ENCODE measurements at regions of chr16 and their contacts with region 1.

Region 1: DNA sequence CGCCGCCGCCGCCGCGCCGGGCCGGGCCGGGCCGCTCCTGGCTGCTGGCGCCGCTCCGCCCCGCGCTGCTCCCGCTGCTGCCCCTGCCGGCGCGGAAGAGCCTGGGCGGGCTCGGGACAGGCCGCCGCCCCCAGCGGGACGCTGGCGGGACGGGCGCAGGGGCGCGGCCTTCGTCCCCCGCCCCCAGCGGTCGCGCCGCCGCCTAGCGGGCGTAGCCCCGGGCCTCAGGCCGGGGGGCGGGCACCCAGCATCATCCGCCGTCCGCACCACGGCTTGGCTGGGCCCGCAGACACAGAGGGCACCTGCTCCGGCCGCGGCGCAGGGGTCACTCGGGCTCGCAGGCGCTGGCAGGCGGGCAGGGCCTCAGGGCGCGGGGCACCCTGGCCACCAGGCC is at the start of gene AMFR:
- DNase-seq: peak; percentile 57 to 86 (median 68)
- ATAC-seq: peak; percentile 97
- H3K4me3 ChIP-seq: peak within 1 kb of the TSS; percentile 73
- H3K4me3 Mint-ChIP-seq: peak within 1 kb of the TSS; percentile 95 to 100 (median 98)
- H3K27ac ChIP-seq: peak within 1 kb of the TSS; percentile 82
- H3K27ac Mint-ChIP-seq: peak within 1 kb of the TSS; percentile 74 to 96 (median 94)
- H3K4me1 ChIP-seq: peaks cover 6 to 8% of the 10 kb centered on the region in 2 donors
- H3K4me1 Mint-ChIP-seq: peaks cover 32 to 45% (median 40%) of the 10 kb centered on the region in 7 donors
- H3K27me3 ChIP-seq: no peaks in the 10 kb centered on the region
- H3K27me3 Mint-ChIP-seq: no peaks in the 10 kb centered on the region
- total RNA-seq, gene AMFR: 45.5 to 83.3 (median 62.0) TPM

Region 2: GRCh38 chr16:56356276-56357240 is 68.9 kb before region 1 on chr16:
- CTCF ChIA-PET with region 1: no interaction called
- POLR2A ChIA-PET with region 1: no interaction called
- intact Hi-C with region 1: loop called (anchors 2 kb)
- DNase-seq: peak; percentile 26 to 62 (median 43)
- ATAC-seq: peak; percentile 87
- H3K4me3 ChIP-seq: peak overlapping the region; percentile 63
- H3K4me3 Mint-ChIP-seq: peak overlapping the region; percentile 82 to 93 (median 90)
- H3K27ac ChIP-seq: peak overlapping the region; percentile 60
- H3K27ac Mint-ChIP-seq: peak overlapping the region; percentile 71 to 95 (median 91)
- H3K4me1 ChIP-seq: peaks cover 0 to 11% of the 10 kb centered on the region in 2 donors
- H3K4me1 Mint-ChIP-seq: peaks cover 4 to 41% (median 38%) of the 10 kb centered on the region in 7 donors
- H3K27me3 ChIP-seq: no peaks in the 10 kb centered on the region
- H3K27me3 Mint-ChIP-seq: no peaks in the 10 kb centered on the region

Region 3: GRCh38 chr16:56409195-56409594 is 16.2 kb before region 1 on chr16:
- CTCF ChIA-PET with region 1: no interaction called
- POLR2A ChIA-PET with region 1: interaction called, 3 read pairs
- intact Hi-C with region 1: loop called in 1 of 2 experiments (anchors 2 kb)
- DNase-seq: no peak
- ATAC-seq: no peak
- H3K4me3 ChIP-seq: no peak overlapping the region
- H3K4me3 Mint-ChIP-seq: no peak overlapping the region
- H3K27ac ChIP-seq: no peak overlapping the region
- H3K27ac Mint-ChIP-seq: peak overlapping the region in 1 of 9 donors; percentile 26
- H3K4me1 ChIP-seq: no peaks in the 10 kb centered on the region
- H3K4me1 Mint-ChIP-seq: peaks cover 0 to 14% (median 2%) of the 10 kb centered on the region in 7 donors
- H3K27me3 ChIP-seq: no peaks in the 10 kb centered on the region
- H3K27me3 Mint-ChIP-seq: no peaks in the 10 kb centered on the region

Region 4: GRCh38 chr16:56436258-56436657 is 10.8 kb after region 1 on chr16:
- CTCF ChIA-PET with region 1: no interaction called
- POLR2A ChIA-PET with region 1: interaction called, 4 read pairs
- intact Hi-C with region 1: loop called in 1 of 2 experiments (anchors 1 kb)
- DNase-seq: no peak
- ATAC-seq: no peak
- H3K4me3 ChIP-seq: no peak overlapping the region
- H3K4me3 Mint-ChIP-seq: no peak overlapping the region
- H3K27ac ChIP-seq: no peak overlapping the region
- H3K27ac Mint-ChIP-seq: peak overlapping the region in 2 of 9 donors; percentile 18 to 36
- H3K4me1 ChIP-seq: no peaks in the 10 kb centered on the region
- H3K4me1 Mint-ChIP-seq: peaks cover 0 to 11% (median 5%) of the 10 kb centered on the region in 7 donors
- H3K27me3 ChIP-seq: no peaks in the 10 kb centered on the region
- H3K27me3 Mint-ChIP-seq: no peaks in the 10 kb centered on the region

Region 5: GRCh38 chr16:56450986-56451752 is 25.7 kb after region 1 on chr16 and contains the starts of genes NUDT21 and OGFOD1:
- CTCF ChIA-PET with region 1: interaction called, 3 read pairs
- POLR2A ChIA-PET with region 1: interaction called, 5 read pairs
- intact Hi-C with region 1: loop called (anchors 1 kb)
- DNase-seq: peak; percentile 67 to 96 (median 93)
- ATAC-seq: peak; percentile 99
- H3K4me3 ChIP-seq: peak within 1 kb of the TSS; percentile 96
- H3K4me3 Mint-ChIP-seq: peak within 1 kb of the TSS; percentile 94 to 100 (median 97)
- H3K27ac ChIP-seq: peak within 1 kb of the TSS; percentile 92
- H3K27ac Mint-ChIP-seq: peak within 1 kb of the TSS; percentile 92 to 98 (median 93)
- H3K4me1 ChIP-seq: peaks cover 24 to 42% of the 10 kb centered on the region in 2 donors
- H3K4me1 Mint-ChIP-seq: peaks cover 50 to 77% (median 64%) of the 10 kb centered on the region in 7 donors
- H3K27me3 ChIP-seq: no peaks in the 10 kb centered on the region
- H3K27me3 Mint-ChIP-seq: no peaks in the 10 kb centered on the region
- total RNA-seq, gene NUDT21: 74.0 to 191 (median 97.5) TPM
- total RNA-seq, gene OGFOD1: 23.8 to 51.8 (median 42.1) TPM

Region 6: GRCh38 chr16:56519459-56520250 is 94.2 kb after region 1 on chr16 and contains the start of gene BBS2:
- CTCF ChIA-PET with region 1: no interaction called
- POLR2A ChIA-PET with region 1: no interaction called
- intact Hi-C with region 1: loop called in 1 of 2 experiments (anchors 1 kb)
- DNase-seq: peak; percentile 84 to 93 (median 92)
- ATAC-seq: peak; percentile 89
- H3K4me3 ChIP-seq: peak within 1 kb of the TSS; percentile 99
- H3K4me3 Mint-ChIP-seq: peak within 1 kb of the TSS; percentile 82 to 91 (median 86)
- H3K27ac ChIP-seq: peak within 1 kb of the TSS; percentile 92
- H3K27ac Mint-ChIP-seq: peak within 1 kb of the TSS; percentile 60 to 95 (median 90)
- H3K4me1 ChIP-seq: peaks cover 8 to 26% of the 10 kb centered on the region in 2 donors
- H3K4me1 Mint-ChIP-seq: peaks cover 11 to 62% (median 52%) of the 10 kb centered on the region in 7 donors
- H3K27me3 ChIP-seq: no peaks in the 10 kb centered on the region
- H3K27me3 Mint-ChIP-seq: no peaks in the 10 kb centered on the region
- total RNA-seq, gene BBS2: 14.7 to 130 (median 84.0) TPM

Region 7: DNA sequence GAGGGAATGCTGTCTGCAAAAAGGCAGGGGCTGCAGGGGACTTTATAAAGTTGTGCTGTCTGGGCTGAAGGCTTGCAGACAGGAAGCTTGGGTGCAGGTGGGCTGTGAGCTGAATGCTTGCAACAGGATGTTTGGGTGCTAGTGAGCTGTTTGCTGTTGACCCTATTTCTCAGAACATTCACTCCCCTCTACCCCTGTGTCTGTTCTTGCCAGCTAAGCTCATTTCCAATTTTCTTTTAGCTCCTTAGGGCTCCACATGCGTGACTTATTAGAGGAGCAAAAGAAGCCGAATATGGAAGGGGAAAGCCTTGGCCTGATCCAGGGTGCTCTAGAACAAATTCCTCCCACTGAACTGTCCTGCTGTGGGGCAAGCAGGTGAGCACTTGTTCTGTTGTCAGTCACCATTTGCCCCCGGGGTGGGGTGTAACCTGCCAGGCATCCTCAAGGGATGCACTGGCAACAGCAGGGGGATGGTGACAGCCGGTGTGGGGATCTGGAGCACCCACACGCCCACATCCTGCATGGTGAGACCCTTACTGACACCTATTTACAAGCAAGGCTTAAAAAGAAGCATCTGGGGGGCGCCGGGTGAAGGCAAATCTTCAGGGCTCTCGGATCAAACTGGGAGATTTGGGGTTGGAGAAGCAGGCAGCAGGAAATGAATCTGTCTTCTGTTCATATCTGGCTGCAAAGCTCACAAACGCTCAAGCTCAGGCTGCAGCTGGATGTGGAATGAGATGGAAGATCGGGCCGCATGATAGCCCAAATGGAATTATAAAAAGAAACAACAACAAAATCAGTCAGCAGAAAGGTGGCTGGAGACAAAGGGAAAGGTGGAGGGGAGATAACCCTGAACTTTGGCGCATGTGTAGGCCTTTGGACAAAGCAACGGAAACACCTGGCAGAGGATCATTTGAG is 283.3 kb after region 1 on chr16:
- CTCF ChIA-PET with region 1: no interaction called
- POLR2A ChIA-PET with region 1: no interaction called
- intact Hi-C with region 1: loop called in 1 of 2 experiments (anchors 10 kb)
- DNase-seq: peak in 6 of 9 donors; percentile 35 to 53 (median 47)
- ATAC-seq: peak; percentile 77
- H3K4me3 ChIP-seq: peak overlapping the region; percentile 65
- H3K4me3 Mint-ChIP-seq: peak overlapping the region; percentile 72 to 89 (median 83)
- H3K27ac ChIP-seq: peak overlapping the region; percentile 69
- H3K27ac Mint-ChIP-seq: peak overlapping the region; percentile 80 to 100 (median 89)
- H3K4me1 ChIP-seq: peaks cover 17 to 26% of the 10 kb centered on the region in 2 donors
- H3K4me1 Mint-ChIP-seq: peaks cover 14 to 41% (median 36%) of the 10 kb centered on the region in 7 donors
- H3K27me3 ChIP-seq: no peaks in the 10 kb centered on the region
- H3K27me3 Mint-ChIP-seq: no peaks in the 10 kb centered on the region